ENCODE measurements at regions of chr7 and their contacts with region 1.

Region 1: DNA sequence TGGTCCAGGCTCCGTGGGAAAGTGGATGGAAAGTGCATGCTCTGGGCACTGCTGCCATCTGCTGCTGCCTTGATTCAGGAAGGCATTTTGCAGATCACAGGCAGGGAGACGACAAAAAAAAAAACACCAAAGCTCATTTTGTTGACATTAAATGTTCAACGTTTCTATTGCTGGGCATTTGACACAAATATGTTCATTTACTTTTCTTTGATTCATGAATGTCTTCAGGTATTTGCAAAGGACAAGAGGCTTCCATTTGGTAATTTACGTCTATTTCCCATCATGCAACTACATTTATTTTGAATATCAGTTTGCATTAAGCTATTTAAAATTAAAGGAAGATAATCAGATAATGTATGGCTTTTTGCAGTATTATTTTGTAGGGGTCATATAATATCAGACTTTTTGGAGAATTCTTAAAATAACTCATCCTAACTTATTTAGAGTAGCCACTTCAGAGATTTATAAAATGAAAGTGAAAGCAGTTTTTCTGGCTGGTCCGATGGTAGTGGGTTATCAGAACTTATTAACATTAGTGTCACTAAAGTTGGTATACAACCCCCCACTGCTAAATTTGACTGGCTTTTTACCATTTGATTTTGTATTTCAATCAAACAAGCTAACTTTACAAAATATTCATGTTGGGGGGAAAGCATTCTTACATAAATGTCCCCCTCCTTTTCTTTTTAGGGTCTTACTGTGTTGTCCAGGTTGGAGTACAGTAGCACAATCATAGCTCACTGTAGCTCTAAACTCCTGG is 65.3 kb downstream of the PDIA4 start:
- DNase-seq: peak; percentile 59
- H3K4me3 ChIP-seq: peak overlapping the region; percentile 62 to 86 (median 84)
- H3K27ac ChIP-seq: peak overlapping the region; percentile 91
- H3K4me1 ChIP-seq: peaks cover 11% of the 10 kb centered on the region
- H3K27me3 ChIP-seq: no peaks in the 10 kb centered on the region
- CTCF ChIP-seq: peak; percentile 84 to 88

Region 2: DNA sequence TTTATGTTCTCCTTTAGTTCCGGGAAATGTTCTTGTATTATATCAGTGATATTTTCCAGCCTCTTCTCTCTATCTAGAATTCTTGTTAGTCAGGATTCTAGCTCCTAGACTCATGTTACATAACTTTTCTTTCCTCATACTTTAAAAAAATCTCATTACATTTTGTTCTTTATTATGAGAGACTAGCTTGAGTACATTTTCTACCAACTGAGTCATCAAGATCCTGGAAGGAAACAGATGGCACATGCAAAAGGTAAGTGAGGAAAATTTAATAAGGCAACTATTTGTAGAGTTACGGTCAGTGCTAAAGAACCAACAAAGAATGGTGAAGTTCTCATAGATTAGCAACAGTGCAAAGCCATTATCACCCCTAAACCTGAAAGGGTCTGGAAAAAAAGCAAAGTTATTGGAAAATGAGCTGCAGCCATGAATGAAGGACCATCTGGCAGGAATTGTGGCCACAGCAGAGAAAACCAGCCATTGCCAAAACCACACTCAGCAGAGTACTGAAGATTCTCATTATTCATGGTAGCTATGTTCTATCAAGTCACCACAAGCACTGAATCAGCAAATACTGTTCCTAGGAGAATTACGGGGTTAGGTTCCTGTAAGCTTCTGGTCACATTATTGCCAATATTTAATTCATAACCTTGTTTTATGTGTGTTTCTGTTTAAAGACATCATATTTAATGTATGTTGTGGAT is 470.7 kb before region 1 on chr7:
- CTCF ChIA-PET with region 1: interaction called, 4 read pairs
- dilution Hi-C with region 1: loop called (anchors 5 kb)
- in situ Hi-C with region 1: no loop called
- intact Hi-C with region 1: no loop called
- DNase-seq: peak; percentile 68
- H3K4me3 ChIP-seq: no peak overlapping the region
- H3K27ac ChIP-seq: peak overlapping the region; percentile 14
- H3K4me1 ChIP-seq: no peaks in the 10 kb centered on the region
- H3K27me3 ChIP-seq: no peaks in the 10 kb centered on the region
- CTCF ChIP-seq: no peak

Region 3: GRCh38 chr7:148575640-148576411 is 387.2 kb before region 1 on chr7:
- CTCF ChIA-PET with region 1: no interaction called
- dilution Hi-C with region 1: loop called (anchors 10 kb)
- in situ Hi-C with region 1: loop called (anchors 5 to 10 kb)
- intact Hi-C with region 1: loop called (anchors 1 kb)
- DNase-seq: peak; percentile 42
- H3K4me3 ChIP-seq: no peak overlapping the region
- H3K27ac ChIP-seq: no peak overlapping the region
- H3K4me1 ChIP-seq: no peaks in the 10 kb centered on the region
- H3K27me3 ChIP-seq: no peaks in the 10 kb centered on the region
- CTCF ChIP-seq: peak; percentile 88 to 89

Region 4: DNA sequence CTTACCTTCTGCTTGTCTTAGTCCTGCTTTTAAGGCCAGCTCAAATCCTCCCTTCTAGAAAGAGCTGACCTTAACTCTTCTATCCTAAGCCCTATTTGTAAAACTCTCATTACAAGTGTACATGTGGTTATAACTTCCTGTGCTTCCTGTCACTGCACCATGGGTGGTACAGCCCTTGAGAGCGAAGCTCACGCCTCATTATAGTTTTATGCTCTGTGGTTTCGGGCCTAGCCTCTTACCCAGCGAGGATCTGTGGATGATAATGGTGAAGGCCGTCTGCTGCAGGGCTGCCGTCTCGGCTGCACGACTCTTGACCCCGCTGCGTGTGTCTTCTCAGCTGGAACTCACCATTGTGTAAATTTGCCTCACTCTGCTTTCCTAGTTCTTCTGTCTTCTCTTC is 189.7 kb before region 1 on chr7:
- CTCF ChIA-PET with region 1: no interaction called
- dilution Hi-C with region 1: no loop called
- in situ Hi-C with region 1: no loop called
- intact Hi-C with region 1: loop called (anchors 2 kb)
- DNase-seq: no peak
- H3K4me3 ChIP-seq: no peak overlapping the region
- H3K27ac ChIP-seq: peak overlapping the region; percentile 32
- H3K4me1 ChIP-seq: peaks cover 14% of the 10 kb centered on the region
- H3K27me3 ChIP-seq: no peaks in the 10 kb centered on the region
- CTCF ChIP-seq: no peak

Region 5: DNA sequence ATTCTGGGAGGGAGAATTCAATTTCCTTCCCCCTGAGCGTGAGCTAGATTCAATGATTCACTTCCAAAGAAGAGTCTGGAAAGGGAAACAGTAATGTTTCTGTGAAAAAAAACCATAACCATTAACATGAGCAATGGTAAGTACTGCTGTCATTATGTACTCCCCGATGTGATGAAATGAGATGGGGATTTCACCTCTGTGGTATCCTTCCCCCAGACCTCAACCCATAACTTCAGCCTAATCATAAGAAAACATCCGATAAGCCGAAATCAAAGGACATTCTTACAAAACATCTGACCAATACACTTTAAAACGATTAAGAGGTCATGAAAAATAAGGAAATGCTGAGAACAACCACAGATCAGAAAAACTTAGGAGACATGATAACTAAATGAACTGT is 106.1 kb before region 1 on chr7:
- CTCF ChIA-PET with region 1: interaction called, 3 read pairs
- dilution Hi-C with region 1: no loop called
- in situ Hi-C with region 1: no loop called
- intact Hi-C with region 1: loop called (anchors 1 kb)
- DNase-seq: peak; percentile 43
- H3K4me3 ChIP-seq: no peak overlapping the region
- H3K27ac ChIP-seq: no peak overlapping the region
- H3K4me1 ChIP-seq: no peaks in the 10 kb centered on the region
- H3K27me3 ChIP-seq: no peaks in the 10 kb centered on the region
- CTCF ChIP-seq: no peak

Region 6: DNA sequence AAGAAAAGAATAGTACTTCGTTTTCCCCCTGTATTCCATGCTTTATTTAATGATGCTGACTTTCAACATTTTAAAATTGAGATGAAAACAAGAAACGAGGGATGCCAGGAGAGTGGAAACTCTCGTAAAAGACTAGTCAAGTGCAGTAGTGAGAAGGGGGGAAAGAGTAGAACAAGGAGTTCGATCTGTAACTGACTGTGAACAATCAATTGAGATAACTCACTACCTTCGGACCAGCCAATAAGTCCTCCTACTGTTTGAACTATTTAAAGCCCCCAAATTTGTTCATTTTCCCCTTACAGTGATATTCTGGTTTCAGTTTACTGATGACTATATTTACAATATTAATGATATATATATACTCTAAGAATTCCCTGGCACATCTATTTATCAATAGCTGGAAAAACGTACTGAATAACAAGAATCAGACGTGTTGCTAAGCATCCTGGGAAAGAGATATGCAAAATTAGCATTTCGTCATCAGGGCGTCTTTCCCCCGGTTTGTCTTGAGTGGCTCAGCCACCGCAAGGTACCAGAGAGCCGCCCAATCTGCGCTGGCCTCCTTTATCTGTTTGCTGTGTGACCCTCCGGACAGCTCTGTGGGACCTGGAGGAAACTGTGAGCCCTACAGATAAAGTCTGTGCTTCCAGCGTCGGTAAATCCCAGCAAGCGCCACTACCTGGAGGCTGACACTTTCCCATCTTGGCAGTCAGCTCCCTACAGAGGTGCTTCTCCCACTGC is 24.2 kb after region 1 on chr7:
- CTCF ChIA-PET with region 1: no interaction called
- dilution Hi-C with region 1: no loop called
- in situ Hi-C with region 1: no loop called
- intact Hi-C with region 1: loop called (anchors 2 kb)
- DNase-seq: peak; percentile 81
- H3K4me3 ChIP-seq: peak overlapping the region; percentile 54 to 59 (median 56)
- H3K27ac ChIP-seq: peak overlapping the region; percentile 84
- H3K4me1 ChIP-seq: peaks cover 29% of the 10 kb centered on the region
- H3K27me3 ChIP-seq: no peaks in the 10 kb centered on the region
- CTCF ChIP-seq: no peak

Region 7: DNA sequence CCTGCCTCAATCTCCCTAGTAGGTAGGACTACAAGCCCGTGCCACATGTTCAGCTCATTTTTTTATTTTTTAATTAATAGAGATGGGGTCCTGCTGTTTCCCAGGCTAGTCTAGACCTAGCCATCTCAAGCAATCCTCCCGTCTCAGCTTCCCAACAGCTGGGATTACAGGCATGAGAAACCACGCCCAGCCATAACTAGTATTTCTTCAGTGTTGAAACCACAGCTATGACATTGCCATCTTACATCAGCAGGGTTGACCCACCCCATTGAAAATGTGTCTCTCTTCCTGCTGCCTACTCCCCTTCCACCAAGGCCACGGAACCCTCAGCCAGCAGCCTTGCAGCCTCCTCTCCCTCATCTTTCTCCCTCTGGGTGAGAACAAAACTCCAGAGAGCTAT is 596.7 kb after region 1 on chr7:
- CTCF ChIA-PET with region 1: no interaction called
- dilution Hi-C with region 1: no loop called
- in situ Hi-C with region 1: no loop called
- intact Hi-C with region 1: no loop called
- DNase-seq: peak; percentile 45
- H3K4me3 ChIP-seq: no peak overlapping the region
- H3K27ac ChIP-seq: peak overlapping the region; percentile 55
- H3K4me1 ChIP-seq: peaks cover 41% of the 10 kb centered on the region
- H3K27me3 ChIP-seq: no peaks in the 10 kb centered on the region
- CTCF ChIP-seq: no peak